ENCODE measurements at regions of chr1 and their contacts with region 1.

Region 1: DNA sequence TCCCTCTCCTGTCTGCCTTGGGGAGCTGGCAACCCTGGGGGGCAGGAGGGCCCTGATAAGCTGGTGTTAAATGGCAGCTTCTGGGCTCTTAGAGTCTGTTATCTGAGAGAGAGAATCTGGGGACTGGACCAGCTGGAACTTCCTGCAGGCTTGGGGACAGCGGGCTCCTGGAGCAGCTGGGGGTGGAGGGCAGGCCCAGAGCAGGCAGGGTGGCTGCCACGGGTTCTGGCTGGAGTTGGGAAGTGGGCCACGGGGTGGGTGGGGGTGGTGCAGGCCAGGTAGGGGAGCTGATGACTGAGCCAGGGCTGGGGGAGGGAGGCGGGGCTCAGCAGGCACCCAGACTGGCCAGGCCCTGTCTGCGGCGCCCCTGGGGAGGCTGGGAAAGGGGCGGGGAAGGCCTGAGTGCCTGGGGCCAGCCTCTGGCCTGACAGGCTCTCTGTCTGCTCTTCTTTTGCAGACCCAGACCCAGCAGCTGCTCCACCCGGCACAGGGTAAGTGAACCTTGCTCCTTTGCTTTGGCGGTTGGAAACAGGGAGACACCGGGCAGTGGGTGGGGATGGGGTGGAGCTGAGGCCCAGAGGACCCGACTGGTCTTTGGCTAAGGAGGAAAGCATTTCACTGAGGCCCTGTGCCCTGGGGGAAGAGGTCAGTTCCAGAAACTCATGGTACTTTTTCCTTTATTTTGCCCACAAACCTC is 48.6 kb downstream of the ARHGEF10L start:
- DNase-seq: no peak
- ATAC-seq: peak; percentile 30
- H3K4me3 ChIP-seq: no peak overlapping the region
- H3K27ac ChIP-seq: peak overlapping the region; percentile 62
- H3K4me1 ChIP-seq: peaks cover 30% of the 10 kb centered on the region
- H3K27me3 ChIP-seq: no peaks in the 10 kb centered on the region
- CTCF ChIP-seq: no peak
- POLR2A ChIP-seq: no peak
- RAD21 ChIP-seq: no peak

Region 2: DNA sequence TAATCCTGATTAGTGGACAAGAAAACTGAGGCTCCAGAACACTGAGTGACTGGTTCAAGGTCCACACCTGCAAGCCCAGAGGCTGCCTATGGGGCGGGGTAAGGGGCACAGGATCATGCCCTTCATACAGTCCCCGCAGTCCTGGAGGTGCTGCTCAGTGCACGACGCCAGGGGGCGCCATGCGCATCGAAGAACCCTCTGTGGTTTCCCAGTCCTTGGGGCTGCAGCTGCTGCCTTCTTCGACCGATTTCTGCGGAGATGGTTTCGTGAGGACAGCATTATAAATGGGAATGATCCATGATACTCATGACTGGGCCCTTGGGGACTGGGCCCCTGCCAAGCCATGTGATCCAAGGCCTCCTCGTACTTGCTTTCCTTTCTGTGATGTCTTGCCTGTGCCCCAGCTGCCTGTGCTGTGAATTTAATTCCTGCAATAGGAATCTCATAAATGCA is 85.8 kb before region 1 on chr1:
- CTCF ChIA-PET with region 1: interaction called, 7 read pairs
- POLR2A ChIA-PET with region 1: no interaction called
- dilution Hi-C with region 1: no loop called
- in situ Hi-C with region 1: no loop called
- intact Hi-C with region 1: loop called (anchors 5 kb)
- DNase-seq: peak; percentile 85
- ATAC-seq: peak; percentile 99
- H3K4me3 ChIP-seq: no peak overlapping the region
- H3K27ac ChIP-seq: no peak overlapping the region
- H3K4me1 ChIP-seq: no peaks in the 10 kb centered on the region
- H3K27me3 ChIP-seq: peaks cover 3% of the 10 kb centered on the region; the same call in 1 of the 2 replicates
- CTCF ChIP-seq: peak; percentile 93
- POLR2A ChIP-seq: peak; percentile 39; the same call in 1 of the 2 replicates
- RAD21 ChIP-seq: peak; percentile 92

Region 3: GRCh38 chr1:17540255-17541001 is 47.7 kb before region 1 on chr1:
- CTCF ChIA-PET with region 1: no interaction called
- POLR2A ChIA-PET with region 1: no interaction called
- dilution Hi-C with region 1: no loop called
- in situ Hi-C with region 1: no loop called
- intact Hi-C with region 1: loop called (anchors 5 kb)
- DNase-seq: no peak
- ATAC-seq: peak; percentile 71
- H3K4me3 ChIP-seq: peak overlapping the region; percentile 79
- H3K27ac ChIP-seq: peak overlapping the region; percentile 85
- H3K4me1 ChIP-seq: peaks cover 13% of the 10 kb centered on the region
- H3K27me3 ChIP-seq: no peaks in the 10 kb centered on the region
- CTCF ChIP-seq: no peak
- POLR2A ChIP-seq: no peak
- RAD21 ChIP-seq: no peak